ENCODE measurements at regions of chr10 and their contacts with region 1.

Region 1: GRCh38 chr10:58177362-58177947 is 90.2 kb downstream of the IPMK start:
- DNase-seq: no peak
- H3K4me3 Mint-ChIP-seq: no peak overlapping the region
- H3K27ac Mint-ChIP-seq: no peak overlapping the region
- H3K4me1 Mint-ChIP-seq: no peaks in the 10 kb centered on the region
- H3K27me3 Mint-ChIP-seq: no peaks in the 10 kb centered on the region

Region 2: GRCh38 chr10:58094985-58095718 is 82.3 kb before region 1 on chr10:
- CTCF ChIA-PET with region 1: no interaction called
- DNase-seq: no peak
- H3K4me3 Mint-ChIP-seq: no peak overlapping the region
- H3K27ac Mint-ChIP-seq: no peak overlapping the region
- H3K4me1 Mint-ChIP-seq: no peaks in the 10 kb centered on the region
- H3K27me3 Mint-ChIP-seq: no peaks in the 10 kb centered on the region

Region 3: GRCh38 chr10:58291538-58292174 is 114.2 kb after region 1 on chr10:
- CTCF ChIA-PET with region 1: interaction called, 148 read pairs
- DNase-seq: peak; percentile 52
- H3K4me3 Mint-ChIP-seq: no peak overlapping the region
- H3K27ac Mint-ChIP-seq: no peak overlapping the region
- H3K4me1 Mint-ChIP-seq: peaks cover 2% of the 10 kb centered on the region
- H3K27me3 Mint-ChIP-seq: no peaks in the 10 kb centered on the region